ENCODE measurements at regions of chr3 and their contacts with region 1.

Region 1: GRCh38 chr3:14921078-14921616 is 26.2 kb upstream of the NR2C2 start:
- DNase-seq: peak; percentile 84
- H3K4me3 Mint-ChIP-seq: no peak overlapping the region
- H3K27ac Mint-ChIP-seq: no peak overlapping the region
- H3K4me1 Mint-ChIP-seq: no peaks in the 10 kb centered on the region
- H3K27me3 Mint-ChIP-seq: peaks cover 4% of the 10 kb centered on the region

Region 2: GRCh38 chr3:14371573-14372474 is 549.3 kb before region 1 on chr3:
- CTCF ChIA-PET with region 1: no interaction called
- POLR2A ChIA-PET with region 1: no interaction called
- DNase-seq: no peak
- H3K4me3 Mint-ChIP-seq: no peak overlapping the region
- H3K27ac Mint-ChIP-seq: no peak overlapping the region
- H3K4me1 Mint-ChIP-seq: peaks cover 16% of the 10 kb centered on the region
- H3K27me3 Mint-ChIP-seq: no peaks in the 10 kb centered on the region

Region 3: DNA sequence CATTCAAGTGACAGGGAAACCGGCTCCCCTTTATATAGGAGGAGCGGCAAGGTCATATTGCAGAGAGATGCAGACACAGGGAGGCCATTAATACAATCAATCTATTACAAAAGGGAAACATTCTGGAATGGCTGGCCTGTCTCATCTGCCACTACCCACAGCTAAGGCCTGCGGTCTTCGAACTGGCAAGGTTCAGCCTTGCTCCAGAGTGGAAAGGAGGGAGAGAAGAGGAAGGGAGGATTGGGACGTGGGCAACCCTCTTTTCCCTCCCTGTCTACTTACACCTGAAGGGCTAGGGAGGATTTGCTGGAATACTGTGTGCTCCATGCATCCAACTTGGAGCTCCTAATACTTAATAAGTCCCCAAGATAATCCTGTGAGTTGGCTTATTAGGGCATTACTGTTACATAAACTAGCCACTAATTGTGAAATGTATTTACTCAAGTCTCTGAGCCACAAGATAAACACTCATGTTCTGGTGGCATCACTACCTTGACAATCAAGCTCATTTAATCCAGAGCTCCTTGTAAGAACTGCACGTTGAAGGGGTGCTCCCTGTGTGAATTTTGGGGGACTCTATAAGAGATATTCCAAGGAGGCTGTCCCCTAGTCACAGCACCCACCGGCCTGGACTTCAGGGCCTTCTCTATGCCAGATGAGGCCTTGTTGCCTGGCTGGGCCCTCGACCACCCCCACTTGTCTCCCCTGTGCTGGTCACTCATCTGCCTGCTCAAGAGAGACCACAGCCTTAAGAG is 289.3 kb before region 1 on chr3:
- CTCF ChIA-PET with region 1: interaction called, 11 read pairs
- POLR2A ChIA-PET with region 1: no interaction called
- DNase-seq: no peak
- H3K4me3 Mint-ChIP-seq: no peak overlapping the region
- H3K27ac Mint-ChIP-seq: no peak overlapping the region
- H3K4me1 Mint-ChIP-seq: no peaks in the 10 kb centered on the region
- H3K27me3 Mint-ChIP-seq: peaks cover 10% of the 10 kb centered on the region

Region 4: GRCh38 chr3:14672588-14672987 is 248.6 kb before region 1 on chr3:
- CTCF ChIA-PET with region 1: interaction called, 23 read pairs
- POLR2A ChIA-PET with region 1: interaction called, 5 read pairs
- DNase-seq: no peak
- H3K4me3 Mint-ChIP-seq: no peak overlapping the region
- H3K27ac Mint-ChIP-seq: no peak overlapping the region
- H3K4me1 Mint-ChIP-seq: no peaks in the 10 kb centered on the region
- H3K27me3 Mint-ChIP-seq: no peaks in the 10 kb centered on the region

Region 5: DNA sequence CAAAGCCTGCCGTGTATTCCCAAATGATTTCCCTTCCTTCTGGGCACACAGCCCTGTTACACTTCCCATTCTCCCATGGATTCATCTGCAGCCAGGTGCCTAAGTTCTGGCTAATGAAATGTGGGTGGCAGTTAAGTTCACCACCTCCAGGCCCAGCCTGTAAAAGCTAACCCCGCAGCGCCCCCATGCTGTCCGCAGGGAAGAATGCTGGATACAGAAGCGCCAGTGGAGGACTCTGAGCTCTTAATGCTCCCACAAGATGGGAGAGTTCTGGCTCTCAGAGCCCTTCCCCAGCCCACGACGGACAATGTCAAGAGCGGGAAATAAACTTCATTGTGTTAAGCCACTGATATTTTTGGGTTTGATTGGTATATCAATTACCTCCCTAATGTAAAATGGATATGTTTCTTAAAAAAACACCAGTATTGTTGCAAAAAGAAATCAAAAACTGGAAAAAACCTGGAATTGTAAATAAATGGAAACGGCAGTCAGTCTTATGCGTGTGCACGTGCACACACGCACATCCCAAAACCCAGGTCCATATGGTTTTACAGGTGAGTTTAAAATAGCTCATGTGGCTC is 140.1 kb before region 1 on chr3:
- CTCF ChIA-PET with region 1: interaction called, 12 read pairs
- POLR2A ChIA-PET with region 1: no interaction called
- DNase-seq: peak; percentile 46
- H3K4me3 Mint-ChIP-seq: no peak overlapping the region
- H3K27ac Mint-ChIP-seq: no peak overlapping the region
- H3K4me1 Mint-ChIP-seq: no peaks in the 10 kb centered on the region
- H3K27me3 Mint-ChIP-seq: peaks cover 28% of the 10 kb centered on the region

Region 6: DNA sequence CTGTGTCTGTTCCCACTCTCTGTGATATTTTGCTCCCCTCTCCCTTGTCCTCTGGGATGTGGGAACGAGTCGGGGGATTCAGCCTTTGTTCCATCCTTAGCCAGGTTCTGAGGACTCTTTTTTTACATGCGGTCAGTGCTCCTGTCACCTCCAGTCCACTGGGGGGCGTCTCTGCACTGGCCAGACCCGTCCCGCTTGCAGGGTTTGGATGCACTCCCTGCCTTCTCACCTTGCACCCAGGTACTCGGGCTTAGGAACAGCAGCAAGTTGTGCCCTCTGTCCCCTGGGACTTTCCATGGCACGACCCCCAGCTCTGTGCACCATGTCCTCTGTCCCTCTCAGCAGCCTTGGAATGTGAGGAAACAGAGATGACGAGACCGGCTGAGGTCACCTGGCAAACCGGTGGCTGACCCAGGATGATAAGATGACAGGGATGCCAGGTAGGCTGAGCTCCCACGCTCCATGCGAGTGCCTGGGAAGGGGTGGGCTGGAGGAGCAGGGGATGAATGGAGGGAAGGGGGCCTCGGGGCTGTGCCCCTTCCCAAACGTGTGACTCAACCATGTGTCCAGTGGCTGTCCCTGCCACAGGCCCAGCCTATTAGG is 129.7 kb before region 1 on chr3:
- CTCF ChIA-PET with region 1: interaction called, 21 read pairs
- POLR2A ChIA-PET with region 1: no interaction called
- DNase-seq: peak; percentile 70
- H3K4me3 Mint-ChIP-seq: no peak overlapping the region
- H3K27ac Mint-ChIP-seq: no peak overlapping the region
- H3K4me1 Mint-ChIP-seq: peaks cover 2% of the 10 kb centered on the region
- H3K27me3 Mint-ChIP-seq: peaks cover 27% of the 10 kb centered on the region